ENCODE measurements at regions of chr22 and their contacts with region 1.

Region 1: DNA sequence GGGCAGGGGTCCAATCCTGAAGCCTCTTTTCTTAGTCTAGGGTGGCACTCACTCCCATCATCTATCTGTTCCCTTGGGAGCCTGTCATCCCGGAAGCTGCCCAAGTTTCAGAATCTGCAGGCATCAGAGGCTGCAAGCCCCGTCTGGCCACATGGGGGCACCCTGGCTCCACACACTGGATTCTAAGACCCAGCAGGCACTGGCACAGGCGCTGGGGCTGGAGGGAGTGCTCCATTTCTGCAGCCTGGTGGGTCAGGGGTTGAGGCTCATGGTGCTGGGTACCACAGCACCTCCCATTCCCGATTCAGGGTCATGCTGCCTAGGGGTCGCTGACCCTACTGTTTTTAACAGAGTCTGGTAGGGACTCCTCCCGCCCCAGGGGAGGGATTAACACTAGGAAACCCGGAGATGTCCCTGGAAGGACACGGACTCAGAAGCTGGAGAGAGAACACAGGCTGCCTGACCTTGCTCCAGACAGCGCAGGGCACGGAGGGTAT is 243.9 kb upstream of the SYN3 start:
- DNase-seq: peak; percentile 82 to 87
- H3K4me3 ChIP-seq: no peak overlapping the region
- H3K4me3 Mint-ChIP-seq: peak overlapping the region; percentile 38
- H3K27ac Mint-ChIP-seq: peak overlapping the region; percentile 71
- H3K4me1 ChIP-seq: 0 out of 2 replicates have a peak, but pooled peaks cover 6% of the 10 kb centered on the region
- H3K4me1 Mint-ChIP-seq: peaks cover 6% of the 10 kb centered on the region
- H3K27me3 ChIP-seq: no peaks in the 10 kb centered on the region
- H3K27me3 Mint-ChIP-seq: no peaks in the 10 kb centered on the region
- CTCF ChIP-seq: peak; percentile 95 to 96

Region 2: DNA sequence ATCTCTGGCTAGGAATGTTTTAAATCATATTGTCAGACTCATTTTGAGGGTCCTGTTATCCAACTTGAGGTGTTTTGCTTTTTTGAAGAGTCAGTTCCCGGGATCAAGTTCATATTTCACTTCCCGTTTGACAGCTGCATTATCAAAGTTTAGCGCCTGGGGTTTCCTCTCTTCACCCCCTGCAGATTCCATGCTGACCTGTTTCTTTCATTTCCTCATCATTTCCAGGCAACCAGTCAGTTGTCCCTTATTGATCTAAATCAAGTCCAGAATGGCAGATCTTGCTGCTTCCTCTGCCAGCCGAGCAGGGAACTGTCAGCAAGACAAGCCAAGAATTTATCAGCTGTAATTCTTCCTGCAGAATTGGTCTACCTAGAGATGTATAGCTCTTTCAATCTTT is 46.3 kb before region 1 on chr22:
- CTCF ChIA-PET with region 1: no interaction called
- POLR2A ChIA-PET with region 1: no interaction called
- intact Hi-C with region 1: no loop called
- DNase-seq: no peak
- H3K4me3 ChIP-seq: no peak overlapping the region
- H3K4me3 Mint-ChIP-seq: no peak overlapping the region
- H3K27ac Mint-ChIP-seq: no peak overlapping the region
- H3K4me1 ChIP-seq: no peaks in the 10 kb centered on the region
- H3K4me1 Mint-ChIP-seq: no peaks in the 10 kb centered on the region
- H3K27me3 ChIP-seq: no peaks in the 10 kb centered on the region
- H3K27me3 Mint-ChIP-seq: peaks cover 10% of the 10 kb centered on the region
- CTCF ChIP-seq: no peak

Region 3: DNA sequence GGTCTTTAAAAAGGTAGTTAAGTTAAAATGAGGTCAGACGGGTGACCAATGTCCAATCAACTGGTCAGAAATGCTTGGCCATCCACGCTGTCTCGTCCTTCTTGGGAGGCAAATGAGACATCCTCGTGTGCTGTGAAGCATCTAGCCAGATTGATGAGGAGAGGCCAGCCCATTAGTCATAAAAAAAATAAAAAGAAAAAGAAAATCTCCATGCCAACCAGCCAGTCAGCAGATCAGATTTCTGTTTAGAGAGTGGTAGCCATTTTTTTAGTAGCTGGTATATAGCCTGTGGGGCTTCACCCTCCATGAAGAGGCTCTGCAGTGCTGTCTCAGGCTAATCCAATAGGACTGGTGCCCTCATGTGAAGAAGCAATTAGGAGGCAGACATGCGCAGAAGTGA is 99.2 kb after region 1 on chr22:
- CTCF ChIA-PET with region 1: interaction called, 4 read pairs
- POLR2A ChIA-PET with region 1: interaction called, 3 read pairs
- intact Hi-C with region 1: loop called (anchors 5 kb)
- DNase-seq: no peak
- H3K4me3 ChIP-seq: no peak overlapping the region
- H3K4me3 Mint-ChIP-seq: no peak overlapping the region
- H3K27ac Mint-ChIP-seq: no peak overlapping the region
- H3K4me1 ChIP-seq: no peaks in the 10 kb centered on the region
- H3K4me1 Mint-ChIP-seq: no peaks in the 10 kb centered on the region
- H3K27me3 ChIP-seq: no peaks in the 10 kb centered on the region
- H3K27me3 Mint-ChIP-seq: no peaks in the 10 kb centered on the region
- CTCF ChIP-seq: no peak

Region 4: GRCh38 chr22:33438273-33438672 is 136.2 kb after region 1 on chr22:
- CTCF ChIA-PET with region 1: no interaction called
- POLR2A ChIA-PET with region 1: no interaction called
- intact Hi-C with region 1: no loop called
- DNase-seq: no peak
- H3K4me3 ChIP-seq: no peak overlapping the region
- H3K4me3 Mint-ChIP-seq: no peak overlapping the region
- H3K27ac Mint-ChIP-seq: no peak overlapping the region
- H3K4me1 ChIP-seq: no peaks in the 10 kb centered on the region
- H3K4me1 Mint-ChIP-seq: no peaks in the 10 kb centered on the region
- H3K27me3 ChIP-seq: no peaks in the 10 kb centered on the region
- H3K27me3 Mint-ChIP-seq: no peaks in the 10 kb centered on the region
- CTCF ChIP-seq: no peak

Region 5: DNA sequence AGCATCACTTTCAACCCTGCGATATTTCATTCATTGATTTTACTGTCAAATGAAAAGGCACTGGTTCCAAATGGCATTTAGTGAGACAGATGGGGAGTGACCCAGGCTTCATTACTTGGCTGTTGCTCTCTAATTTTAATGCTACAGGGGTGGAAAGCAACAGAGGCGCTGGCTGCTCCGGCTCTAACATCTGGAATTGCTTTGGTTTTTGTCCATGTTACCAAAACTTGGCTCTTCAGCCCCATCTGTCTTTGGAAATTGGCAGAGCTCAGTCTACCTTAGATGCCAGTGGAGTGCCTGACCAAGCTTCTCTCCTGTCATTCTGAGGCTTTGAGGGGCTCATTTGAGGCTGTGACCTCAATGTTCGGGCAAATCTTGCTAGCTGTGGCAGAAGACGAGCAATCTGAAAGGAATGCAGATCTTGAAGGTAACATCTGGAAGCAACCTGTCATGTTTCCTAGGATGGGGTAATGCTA is 165.6 kb after region 1 on chr22:
- CTCF ChIA-PET with region 1: interaction called, 5 read pairs
- POLR2A ChIA-PET with region 1: no interaction called
- intact Hi-C with region 1: loop called (anchors 1 kb)
- DNase-seq: no peak
- H3K4me3 ChIP-seq: no peak overlapping the region
- H3K4me3 Mint-ChIP-seq: no peak overlapping the region
- H3K27ac Mint-ChIP-seq: no peak overlapping the region
- H3K4me1 ChIP-seq: no peaks in the 10 kb centered on the region; the same call in 1 of the 2 replicates
- H3K4me1 Mint-ChIP-seq: peaks cover 7% of the 10 kb centered on the region
- H3K27me3 ChIP-seq: no peaks in the 10 kb centered on the region
- H3K27me3 Mint-ChIP-seq: no peaks in the 10 kb centered on the region
- CTCF ChIP-seq: no peak

Region 6: GRCh38 chr22:33510429-33510904 is 208.4 kb after region 1 on chr22:
- CTCF ChIA-PET with region 1: no interaction called
- POLR2A ChIA-PET with region 1: no interaction called
- intact Hi-C with region 1: loop called (anchors 1 kb)
- DNase-seq: peak in 1 of 2 experiments; percentile 27
- H3K4me3 ChIP-seq: no peak overlapping the region
- H3K4me3 Mint-ChIP-seq: no peak overlapping the region
- H3K27ac Mint-ChIP-seq: no peak overlapping the region
- H3K4me1 ChIP-seq: peaks cover 12% of the 10 kb centered on the region
- H3K4me1 Mint-ChIP-seq: no peaks in the 10 kb centered on the region
- H3K27me3 ChIP-seq: no peaks in the 10 kb centered on the region
- H3K27me3 Mint-ChIP-seq: no peaks in the 10 kb centered on the region
- CTCF ChIP-seq: no peak

Region 7: GRCh38 chr22:33519071-33519973 is 217.2 kb after region 1 on chr22:
- CTCF ChIA-PET with region 1: no interaction called
- POLR2A ChIA-PET with region 1: no interaction called
- intact Hi-C with region 1: loop called (anchors 2 kb)
- DNase-seq: peak; percentile 42 to 68
- H3K4me3 ChIP-seq: no peak overlapping the region
- H3K4me3 Mint-ChIP-seq: no peak overlapping the region
- H3K27ac Mint-ChIP-seq: no peak overlapping the region
- H3K4me1 ChIP-seq: peaks cover 8% of the 10 kb centered on the region; the same call in 1 of the 2 replicates
- H3K4me1 Mint-ChIP-seq: peaks cover 2% of the 10 kb centered on the region
- H3K27me3 ChIP-seq: no peaks in the 10 kb centered on the region
- H3K27me3 Mint-ChIP-seq: no peaks in the 10 kb centered on the region
- CTCF ChIP-seq: peak; percentile 64 to 76

Region 8: DNA sequence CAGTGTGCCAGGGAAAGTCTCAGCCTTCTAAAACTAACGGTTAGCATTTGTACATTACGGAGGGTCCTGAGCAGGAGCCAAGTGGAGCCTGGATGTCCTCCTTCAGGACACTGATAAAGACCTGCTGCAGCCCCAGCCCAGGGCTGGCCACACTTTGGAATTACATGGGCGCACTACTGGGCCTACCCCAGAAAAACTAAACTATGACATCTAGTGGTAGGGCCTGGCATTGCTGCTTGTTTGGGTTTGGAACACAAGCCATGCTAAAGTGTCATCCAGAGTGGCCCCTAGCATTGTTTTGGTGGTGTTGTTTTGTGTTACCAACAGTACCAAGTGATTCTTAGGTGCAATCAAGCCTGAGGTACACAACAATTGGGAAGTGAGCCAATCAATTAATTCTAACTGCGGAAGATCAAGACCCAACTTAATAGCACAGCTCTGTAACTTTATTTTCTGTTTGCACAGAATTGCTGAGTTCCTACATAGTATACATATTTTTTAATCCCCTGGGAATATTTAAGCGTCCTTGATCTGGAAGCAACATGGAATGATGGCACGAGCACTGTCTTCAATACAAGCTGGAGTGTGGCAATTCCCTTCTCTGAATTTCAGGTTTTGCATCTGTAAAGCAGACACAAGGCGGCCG is 277.5 kb after region 1 on chr22:
- CTCF ChIA-PET with region 1: no interaction called
- POLR2A ChIA-PET with region 1: no interaction called
- intact Hi-C with region 1: loop called (anchors 1 kb)
- DNase-seq: peak; percentile 77 to 85
- H3K4me3 ChIP-seq: no peak overlapping the region
- H3K4me3 Mint-ChIP-seq: no peak overlapping the region
- H3K27ac Mint-ChIP-seq: peak overlapping the region; percentile 70
- H3K4me1 ChIP-seq: peaks cover 20% of the 10 kb centered on the region
- H3K4me1 Mint-ChIP-seq: peaks cover 23% of the 10 kb centered on the region
- H3K27me3 ChIP-seq: no peaks in the 10 kb centered on the region
- H3K27me3 Mint-ChIP-seq: no peaks in the 10 kb centered on the region
- CTCF ChIP-seq: peak; percentile 92